CD4-positive, alpha-beta memory T cell (primary cell): ENCODE measurements at regions of chr18 and their contacts with region 1.

Region 1: DNA sequence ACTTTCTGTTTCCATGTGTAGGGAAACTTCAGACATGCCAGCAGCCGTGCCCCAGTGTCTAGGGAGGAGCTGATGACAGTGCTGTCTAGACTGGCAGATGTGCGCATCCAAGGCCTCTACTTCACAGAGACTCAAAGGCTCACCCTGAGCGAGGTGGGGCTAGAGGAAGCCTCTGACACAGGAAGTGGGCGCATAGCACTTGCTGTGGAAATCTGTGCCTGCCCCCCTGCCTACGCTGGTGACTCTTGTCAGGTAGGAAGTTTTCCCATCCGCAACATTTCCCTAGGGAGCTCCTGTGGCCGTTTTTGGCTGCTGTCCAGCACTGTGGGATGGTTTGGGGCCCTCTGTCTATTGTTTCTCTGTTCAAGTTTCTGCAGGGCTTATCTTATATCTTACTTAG is 143.1 kb upstream of the TTC39C start:
- DNase-seq: peak; percentile 68 to 94 (median 76)
- H3K4me3 ChIP-seq: no peak overlapping the region
- H3K4me3 Mint-ChIP-seq: peak overlapping the region in 7 of 8 donors; percentile 68 to 81 (median 72)
- H3K27ac ChIP-seq: peak overlapping the region; percentile 7
- H3K27ac Mint-ChIP-seq: peak overlapping the region; percentile 93 to 98 (median 97)
- H3K4me1 ChIP-seq: peaks cover 44% of the 10 kb centered on the region
- H3K4me1 Mint-ChIP-seq: peaks cover 23 to 51% (median 39%) of the 10 kb centered on the region in 4 donors
- H3K27me3 ChIP-seq: no peaks in the 10 kb centered on the region
- H3K27me3 Mint-ChIP-seq: no peaks in the 10 kb centered on the region

Region 2: GRCh38 chr18:23828426-23828825 is 43.0 kb before region 1 on chr18:
- CTCF ChIA-PET with region 1: no interaction called
- POLR2A ChIA-PET with region 1: interaction called, 3 read pairs
- intact Hi-C with region 1: loop called (anchors 5 kb)
- DNase-seq: peak; percentile 68 to 87 (median 83)
- H3K4me3 ChIP-seq: no peak overlapping the region
- H3K4me3 Mint-ChIP-seq: peak overlapping the region in 1 of 8 donors; percentile 57
- H3K27ac ChIP-seq: peak overlapping the region; percentile 48
- H3K27ac Mint-ChIP-seq: peak overlapping the region in 6 of 7 donors; percentile 80 to 96 (median 92)
- H3K4me1 ChIP-seq: peaks cover 15% of the 10 kb centered on the region
- H3K4me1 Mint-ChIP-seq: peaks cover 15 to 36% (median 19%) of the 10 kb centered on the region in 4 donors
- H3K27me3 ChIP-seq: no peaks in the 10 kb centered on the region
- H3K27me3 Mint-ChIP-seq: no peaks in the 10 kb centered on the region

Region 3: DNA sequence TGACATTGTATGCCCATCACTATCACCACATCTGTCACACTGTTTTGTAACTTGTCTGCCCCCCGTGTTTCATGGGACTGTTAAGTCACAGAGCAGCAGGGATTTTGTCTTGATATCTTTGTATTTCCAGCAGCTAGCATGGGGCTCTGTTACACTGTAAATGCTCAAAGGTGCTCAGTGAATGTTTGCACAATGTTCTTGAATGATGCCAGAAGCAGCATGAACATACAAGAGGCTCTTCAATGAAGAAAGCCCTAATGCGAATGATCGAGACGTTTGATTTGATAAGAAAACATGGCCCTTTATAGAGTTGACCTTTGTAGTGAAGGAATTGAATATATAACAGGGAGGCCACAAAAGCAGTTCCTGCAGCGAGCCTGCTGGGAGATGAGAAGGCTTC is 22.2 kb after region 1 on chr18:
- CTCF ChIA-PET with region 1: no interaction called
- POLR2A ChIA-PET with region 1: no interaction called
- intact Hi-C with region 1: loop called (anchors 2 kb)
- DNase-seq: no peak
- H3K4me3 ChIP-seq: no peak overlapping the region
- H3K4me3 Mint-ChIP-seq: no peak overlapping the region
- H3K27ac ChIP-seq: no peak overlapping the region
- H3K27ac Mint-ChIP-seq: no peak overlapping the region
- H3K4me1 ChIP-seq: no peaks in the 10 kb centered on the region
- H3K4me1 Mint-ChIP-seq: no peaks in the 10 kb centered on the region
- H3K27me3 ChIP-seq: no peaks in the 10 kb centered on the region
- H3K27me3 Mint-ChIP-seq: peaks cover 0 to 2% of the 10 kb centered on the region in 2 donors

Region 4: GRCh38 chr18:24462838-24463775 is 591.7 kb after region 1 on chr18:
- CTCF ChIA-PET with region 1: no interaction called
- POLR2A ChIA-PET with region 1: no interaction called
- intact Hi-C with region 1: no loop called
- DNase-seq: no peak
- H3K4me3 ChIP-seq: no peak overlapping the region
- H3K4me3 Mint-ChIP-seq: peak overlapping the region in 7 of 8 donors; percentile 50 to 86 (median 77)
- H3K27ac ChIP-seq: no peak overlapping the region
- H3K27ac Mint-ChIP-seq: peak overlapping the region in 2 of 7 donors; percentile 67 to 75
- H3K4me1 ChIP-seq: no peaks in the 10 kb centered on the region
- H3K4me1 Mint-ChIP-seq: peaks cover 13 to 22% (median 16%) of the 10 kb centered on the region in 4 donors
- H3K27me3 ChIP-seq: no peaks in the 10 kb centered on the region
- H3K27me3 Mint-ChIP-seq: no peaks in the 10 kb centered on the region